ENCODE measurements at regions of chr1 and their contacts with region 1.

Region 1: DNA sequence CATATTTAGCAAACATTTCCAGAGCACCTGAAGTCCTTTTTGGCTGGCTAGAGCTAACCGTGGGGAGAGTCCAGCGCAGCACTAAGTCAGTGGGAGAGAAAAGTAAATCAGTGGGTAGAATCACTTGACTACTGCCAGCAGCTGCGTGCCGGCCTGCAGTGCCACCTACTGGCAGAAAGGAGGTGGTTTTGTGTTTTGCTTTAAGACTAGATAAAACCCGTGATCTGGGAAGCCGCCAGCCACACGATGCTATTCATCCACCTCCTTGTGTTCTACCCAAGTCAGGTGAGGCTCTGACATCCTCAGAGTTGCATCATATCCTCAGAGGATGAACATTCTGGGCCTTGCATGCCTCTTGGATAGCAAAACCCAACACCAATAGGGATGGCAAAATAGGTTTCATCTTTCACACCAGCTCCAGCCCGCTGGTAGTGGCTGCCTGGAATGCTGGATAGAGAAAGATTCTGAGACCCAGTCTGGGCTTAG is 14.1 kb upstream of the HEYL start:
- DNase-seq: peak; percentile 88
- H3K4me3 Mint-ChIP-seq: no peak overlapping the region
- H3K27ac Mint-ChIP-seq: no peak overlapping the region
- H3K4me1 Mint-ChIP-seq: peaks cover 16% of the 10 kb centered on the region
- H3K27me3 Mint-ChIP-seq: peaks cover 12% of the 10 kb centered on the region

Region 2: DNA sequence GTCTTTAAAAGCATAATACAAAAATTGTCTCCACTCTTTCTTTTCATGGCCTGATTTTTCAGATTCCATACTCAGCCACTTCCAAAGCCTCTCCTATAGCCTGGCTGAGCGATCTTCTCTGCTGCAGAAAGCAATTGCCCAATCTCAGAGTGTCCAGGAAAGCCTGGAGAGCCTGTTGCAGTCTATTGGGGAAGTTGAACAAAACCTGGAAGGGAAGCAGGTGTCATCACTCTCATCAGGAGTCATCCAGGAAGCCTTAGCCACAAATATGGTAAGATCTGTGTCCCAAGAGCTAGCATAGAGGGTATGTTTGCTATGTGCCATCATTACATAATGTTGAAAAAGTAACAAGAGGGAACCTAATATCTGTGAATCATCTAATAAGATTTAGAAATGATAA is 292.9 kb before region 1 on chr1:
- CTCF ChIA-PET with region 1: no interaction called
- POLR2A ChIA-PET with region 1: no interaction called
- intact Hi-C with region 1: no loop called
- DNase-seq: no peak
- H3K4me3 Mint-ChIP-seq: no peak overlapping the region
- H3K27ac Mint-ChIP-seq: no peak overlapping the region
- H3K4me1 Mint-ChIP-seq: peaks cover 2% of the 10 kb centered on the region
- H3K27me3 Mint-ChIP-seq: no peaks in the 10 kb centered on the region

Region 3: DNA sequence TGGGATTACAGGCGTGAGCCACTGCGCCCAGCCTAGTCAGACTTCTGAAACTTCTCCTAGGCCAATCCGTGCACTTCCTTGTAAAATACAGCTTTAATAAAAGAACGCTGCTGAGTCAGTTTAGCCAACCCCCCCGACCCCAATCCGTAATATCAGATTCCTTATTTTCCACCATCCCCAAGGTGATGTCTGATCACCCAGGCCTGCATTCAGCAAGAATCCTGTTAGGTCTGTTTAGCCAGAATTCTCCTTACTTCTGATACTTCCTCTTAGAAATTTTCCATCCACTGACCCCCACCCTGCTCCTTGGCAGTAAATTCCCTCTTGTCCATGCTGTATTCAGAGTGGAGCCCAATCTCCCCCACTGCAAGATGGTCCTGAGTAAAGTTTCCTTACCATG is 65.5 kb before region 1 on chr1:
- CTCF ChIA-PET with region 1: interaction called, 12 read pairs
- POLR2A ChIA-PET with region 1: no interaction called
- intact Hi-C with region 1: no loop called
- DNase-seq: no peak
- H3K4me3 Mint-ChIP-seq: no peak overlapping the region
- H3K27ac Mint-ChIP-seq: no peak overlapping the region
- H3K4me1 Mint-ChIP-seq: no peaks in the 10 kb centered on the region
- H3K27me3 Mint-ChIP-seq: no peaks in the 10 kb centered on the region

Region 4: GRCh38 chr1:39631361-39632322 is 21.9 kb before region 1 on chr1:
- CTCF ChIA-PET with region 1: interaction called, 15 read pairs
- POLR2A ChIA-PET with region 1: no interaction called
- intact Hi-C with region 1: no loop called
- DNase-seq: peak; percentile 50
- H3K4me3 Mint-ChIP-seq: no peak overlapping the region
- H3K27ac Mint-ChIP-seq: peak overlapping the region; percentile 15
- H3K4me1 Mint-ChIP-seq: peaks cover 16% of the 10 kb centered on the region
- H3K27me3 Mint-ChIP-seq: peaks cover 24% of the 10 kb centered on the region

Region 5: GRCh38 chr1:39672551-39672947 is 19.0 kb after region 1 on chr1:
- CTCF ChIA-PET with region 1: interaction called, 158 read pairs
- POLR2A ChIA-PET with region 1: no interaction called
- intact Hi-C with region 1: no loop called
- DNase-seq: peak; percentile 54
- H3K4me3 Mint-ChIP-seq: peak overlapping the region; percentile 36
- H3K27ac Mint-ChIP-seq: no peak overlapping the region
- H3K4me1 Mint-ChIP-seq: peaks cover 3% of the 10 kb centered on the region
- H3K27me3 Mint-ChIP-seq: peaks cover 25% of the 10 kb centered on the region

Region 6: GRCh38 chr1:39711104-39711965 is 57.7 kb after region 1 on chr1:
- CTCF ChIA-PET with region 1: interaction called, 45 read pairs
- POLR2A ChIA-PET with region 1: no interaction called
- intact Hi-C with region 1: loop called (anchors 5 kb)
- DNase-seq: no peak
- H3K4me3 Mint-ChIP-seq: no peak overlapping the region
- H3K27ac Mint-ChIP-seq: no peak overlapping the region
- H3K4me1 Mint-ChIP-seq: no peaks in the 10 kb centered on the region
- H3K27me3 Mint-ChIP-seq: peaks cover 15% of the 10 kb centered on the region

Measured in activated CD4-positive, alpha-beta memory T cell treated with anti-CD3 and anti-CD28 coated beads for 36 hours (primary cell).